Activated CD4-positive, alpha-beta T cell treated with anti-CD3 and anti-CD28 coated beads, Interleukin-2, amount 10 ng/mL, durations not matched to agents 24 days and 14 days (primary cell): ENCODE measurements at regions of chr9 and their contacts with region 1.

Region 1: DNA sequence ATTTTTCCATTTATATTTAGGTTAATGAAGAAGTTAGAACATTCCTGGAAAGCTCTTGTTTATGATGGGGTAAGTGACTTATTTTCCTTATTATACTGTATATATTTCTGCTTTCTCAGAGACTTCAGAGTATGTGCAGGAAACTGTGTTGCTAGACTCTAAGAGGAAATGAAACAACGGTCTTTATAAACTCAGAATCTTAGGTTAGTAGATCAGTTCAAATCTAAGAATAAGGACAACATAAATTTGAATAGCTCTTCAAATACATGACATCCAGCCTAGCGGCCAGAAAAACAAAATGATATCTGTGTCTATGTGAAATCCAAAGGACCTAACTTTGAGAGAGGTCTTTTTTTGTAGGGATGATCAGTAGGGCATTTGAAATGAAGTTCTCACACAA is 94.3 kb downstream of the PRKACG start:
- DNase-seq: no peak
- H3K4me3 Mint-ChIP-seq: no peak overlapping the region
- H3K27ac Mint-ChIP-seq: no peak overlapping the region
- H3K4me1 Mint-ChIP-seq: peaks cover 21% of the 10 kb centered on the region
- H3K27me3 Mint-ChIP-seq: no peaks in the 10 kb centered on the region

Region 2: GRCh38 chr9:68609901-68610415 is 309.7 kb before region 1 on chr9:
- intact Hi-C with region 1: no loop called
- DNase-seq: no peak
- H3K4me3 Mint-ChIP-seq: no peak overlapping the region
- H3K27ac Mint-ChIP-seq: no peak overlapping the region
- H3K4me1 Mint-ChIP-seq: no peaks in the 10 kb centered on the region
- H3K27me3 Mint-ChIP-seq: peaks cover 4% of the 10 kb centered on the region

Region 3: GRCh38 chr9:68869022-68869421 is 50.6 kb before region 1 on chr9:
- intact Hi-C with region 1: loop called (anchors 10 kb)
- DNase-seq: no peak
- H3K4me3 Mint-ChIP-seq: no peak overlapping the region
- H3K27ac Mint-ChIP-seq: no peak overlapping the region
- H3K4me1 Mint-ChIP-seq: no peaks in the 10 kb centered on the region
- H3K27me3 Mint-ChIP-seq: no peaks in the 10 kb centered on the region

Region 4: DNA sequence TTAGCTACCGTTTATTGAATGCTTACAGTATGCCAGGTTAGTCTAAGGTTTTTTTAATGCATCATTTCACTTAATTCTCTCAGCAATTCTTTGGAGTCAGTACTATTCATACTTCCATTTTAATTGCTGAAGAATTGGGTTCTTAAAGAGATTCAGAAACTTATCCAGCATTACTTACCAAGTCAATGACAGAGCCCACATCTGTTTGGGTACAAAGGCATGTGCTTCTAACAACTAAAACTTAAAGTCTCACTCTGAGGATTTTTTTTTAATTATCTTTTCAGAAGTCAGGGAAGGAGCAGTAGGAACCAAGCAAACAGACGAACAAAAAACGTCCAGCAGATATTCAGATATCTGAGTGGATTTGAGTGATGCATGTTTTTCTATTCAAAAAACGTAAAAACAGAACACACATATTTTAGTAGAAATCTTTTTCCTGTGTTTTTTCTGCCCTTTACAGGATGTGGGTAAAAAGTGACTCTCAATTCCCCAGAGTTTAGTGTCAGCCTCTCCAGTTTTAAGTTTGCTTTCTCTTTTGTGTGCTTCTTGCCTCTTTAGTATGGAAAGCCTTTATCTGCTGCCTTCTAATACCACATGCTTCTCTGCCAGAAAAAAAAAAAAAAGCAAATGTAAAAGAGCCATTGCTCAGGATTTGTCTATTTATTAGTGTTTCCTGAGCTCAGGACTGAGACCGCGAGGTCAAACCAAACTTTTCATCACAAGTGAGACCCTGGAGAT is 23.8 kb before region 1 on chr9:
- intact Hi-C with region 1: loop called (anchors 2 kb)
- DNase-seq: peak; percentile 75
- H3K4me3 Mint-ChIP-seq: peak overlapping the region; percentile 73
- H3K27ac Mint-ChIP-seq: peak overlapping the region; percentile 82
- H3K4me1 Mint-ChIP-seq: peaks cover 46% of the 10 kb centered on the region
- H3K27me3 Mint-ChIP-seq: no peaks in the 10 kb centered on the region